Activated CD4-positive, alpha-beta T cell treated with anti-CD3 and anti-CD28 coated beads for 36 hours (primary cell): ENCODE measurements at regions of chr15 and their contacts with region 1.

Region 1: DNA sequence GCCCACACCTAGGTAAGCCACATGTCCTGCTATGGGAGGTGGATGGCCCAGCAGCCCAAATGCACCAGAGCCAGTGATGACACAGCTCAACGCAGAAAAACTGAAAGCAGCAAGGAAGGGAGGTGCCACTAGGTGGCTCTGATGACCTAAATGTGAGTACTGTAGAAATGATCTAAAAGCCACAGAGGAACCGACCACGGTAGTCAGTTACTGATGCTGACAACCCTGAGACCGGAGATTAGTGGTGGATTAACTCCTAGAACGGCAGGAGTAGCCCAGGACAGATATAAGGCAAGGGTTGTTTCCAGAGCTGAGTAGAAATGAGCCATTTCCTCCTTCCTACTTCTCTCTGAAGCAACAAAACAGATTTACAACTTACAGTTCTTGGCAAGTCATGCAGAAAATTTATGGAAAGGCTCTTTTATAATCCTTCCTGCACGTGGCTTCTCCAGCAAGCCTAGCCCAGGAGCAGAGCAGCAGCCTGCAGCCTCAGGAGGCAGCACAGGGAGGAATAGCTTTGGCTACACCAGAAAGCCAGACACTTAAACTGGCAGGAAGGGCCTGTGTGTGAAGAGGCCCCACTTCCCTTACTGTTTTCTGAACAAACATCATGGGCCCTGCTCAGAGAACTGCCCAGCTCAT is 13.1 kb downstream of the FBXL22 start:
- DNase-seq: peak; percentile 88
- ATAC-seq: peak; percentile 79
- H3K4me3 Mint-ChIP-seq: no peak overlapping the region
- H3K27ac Mint-ChIP-seq: peak overlapping the region; percentile 88
- H3K4me1 Mint-ChIP-seq: peaks cover 39% of the 10 kb centered on the region
- H3K27me3 Mint-ChIP-seq: no peaks in the 10 kb centered on the region

Region 2: DNA sequence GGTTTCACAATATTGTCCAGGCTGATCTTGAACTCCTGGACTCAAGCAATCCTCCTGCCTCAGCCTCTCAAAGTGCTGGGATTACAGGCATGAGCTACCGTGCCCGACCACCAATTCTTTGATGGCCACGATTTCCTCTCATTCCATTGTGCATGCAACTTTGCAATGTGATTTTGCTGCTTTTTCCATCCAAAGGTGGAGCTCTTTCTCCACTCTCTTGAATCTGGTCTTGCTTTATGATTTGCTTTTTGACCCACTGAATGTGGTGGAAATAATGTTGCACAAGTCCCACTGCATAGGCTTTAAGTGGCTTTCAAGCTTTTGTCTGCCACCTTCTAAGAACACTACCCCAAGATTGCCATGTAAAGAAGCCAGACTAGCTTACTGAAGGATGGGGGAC is 463.7 kb before region 1 on chr15:
- CTCF ChIA-PET with region 1: no interaction called
- POLR2A ChIA-PET with region 1: no interaction called
- intact Hi-C with region 1: no loop called
- DNase-seq: no peak
- ATAC-seq: peak; percentile 36
- H3K4me3 Mint-ChIP-seq: no peak overlapping the region
- H3K27ac Mint-ChIP-seq: no peak overlapping the region
- H3K4me1 Mint-ChIP-seq: peaks cover 7% of the 10 kb centered on the region
- H3K27me3 Mint-ChIP-seq: no peaks in the 10 kb centered on the region

Region 3: DNA sequence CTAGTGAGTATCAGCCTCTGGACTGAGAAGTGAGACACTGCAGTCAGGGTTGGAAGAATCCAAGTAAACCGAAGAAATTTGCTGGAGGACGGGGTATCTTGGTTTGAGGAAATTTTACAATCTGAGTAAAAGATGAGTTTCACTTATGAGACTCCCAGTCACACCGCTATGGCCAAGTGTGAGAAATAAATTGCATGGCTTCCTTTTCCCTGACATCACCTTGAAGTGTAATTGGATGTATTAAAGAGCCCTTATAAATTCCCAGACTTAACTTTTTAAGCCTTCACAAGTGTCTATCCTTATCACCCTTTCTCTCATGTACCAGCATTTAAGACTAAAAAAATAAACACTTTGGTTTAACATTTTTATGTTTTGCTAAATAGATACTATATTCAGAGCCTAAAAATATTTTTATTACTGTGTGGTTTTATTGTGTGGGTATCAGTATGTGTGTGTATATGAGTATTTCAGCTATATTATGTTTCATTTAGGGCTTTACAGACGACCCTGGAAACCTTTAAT is 82.1 kb before region 1 on chr15:
- CTCF ChIA-PET with region 1: no interaction called
- POLR2A ChIA-PET with region 1: no interaction called
- intact Hi-C with region 1: no loop called
- DNase-seq: no peak
- ATAC-seq: no peak
- H3K4me3 Mint-ChIP-seq: no peak overlapping the region
- H3K27ac Mint-ChIP-seq: peak overlapping the region; percentile 38
- H3K4me1 Mint-ChIP-seq: peaks cover 96% of the 10 kb centered on the region
- H3K27me3 Mint-ChIP-seq: no peaks in the 10 kb centered on the region

Region 4: DNA sequence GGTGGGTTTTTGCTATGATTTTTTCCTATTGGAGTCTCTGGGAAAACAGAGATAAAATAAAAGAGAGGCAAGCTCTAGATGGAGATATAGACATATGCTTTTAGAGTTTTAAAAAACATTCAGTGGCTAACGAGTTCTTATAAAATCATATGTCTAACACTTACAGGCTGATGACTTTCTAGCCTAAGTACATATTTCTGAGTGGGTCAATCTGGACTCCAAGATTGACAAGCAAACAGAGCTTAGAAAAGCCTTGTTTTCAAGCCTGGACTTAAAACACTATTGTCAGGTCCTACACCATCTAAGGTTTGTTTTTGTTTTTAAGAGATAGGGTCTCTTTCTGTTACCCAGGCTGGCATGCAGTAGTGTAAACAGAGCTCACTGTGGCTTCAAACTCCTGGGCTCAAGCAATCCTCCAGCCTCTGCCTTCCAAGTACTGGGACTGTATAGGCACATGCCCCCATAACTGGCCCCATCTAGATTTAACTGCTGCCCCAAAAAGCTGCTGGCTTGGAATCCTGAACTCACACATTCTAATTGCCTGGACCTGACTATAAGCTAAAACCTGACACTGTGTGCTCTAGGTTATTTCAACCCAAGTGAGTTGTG is 73.1 kb after region 1 on chr15:
- CTCF ChIA-PET with region 1: interaction called, 11 read pairs
- POLR2A ChIA-PET with region 1: no interaction called
- intact Hi-C with region 1: no loop called
- DNase-seq: no peak
- ATAC-seq: no peak
- H3K4me3 Mint-ChIP-seq: no peak overlapping the region
- H3K27ac Mint-ChIP-seq: peak overlapping the region; percentile 39
- H3K4me1 Mint-ChIP-seq: peaks cover 2% of the 10 kb centered on the region
- H3K27me3 Mint-ChIP-seq: no peaks in the 10 kb centered on the region

Region 5: DNA sequence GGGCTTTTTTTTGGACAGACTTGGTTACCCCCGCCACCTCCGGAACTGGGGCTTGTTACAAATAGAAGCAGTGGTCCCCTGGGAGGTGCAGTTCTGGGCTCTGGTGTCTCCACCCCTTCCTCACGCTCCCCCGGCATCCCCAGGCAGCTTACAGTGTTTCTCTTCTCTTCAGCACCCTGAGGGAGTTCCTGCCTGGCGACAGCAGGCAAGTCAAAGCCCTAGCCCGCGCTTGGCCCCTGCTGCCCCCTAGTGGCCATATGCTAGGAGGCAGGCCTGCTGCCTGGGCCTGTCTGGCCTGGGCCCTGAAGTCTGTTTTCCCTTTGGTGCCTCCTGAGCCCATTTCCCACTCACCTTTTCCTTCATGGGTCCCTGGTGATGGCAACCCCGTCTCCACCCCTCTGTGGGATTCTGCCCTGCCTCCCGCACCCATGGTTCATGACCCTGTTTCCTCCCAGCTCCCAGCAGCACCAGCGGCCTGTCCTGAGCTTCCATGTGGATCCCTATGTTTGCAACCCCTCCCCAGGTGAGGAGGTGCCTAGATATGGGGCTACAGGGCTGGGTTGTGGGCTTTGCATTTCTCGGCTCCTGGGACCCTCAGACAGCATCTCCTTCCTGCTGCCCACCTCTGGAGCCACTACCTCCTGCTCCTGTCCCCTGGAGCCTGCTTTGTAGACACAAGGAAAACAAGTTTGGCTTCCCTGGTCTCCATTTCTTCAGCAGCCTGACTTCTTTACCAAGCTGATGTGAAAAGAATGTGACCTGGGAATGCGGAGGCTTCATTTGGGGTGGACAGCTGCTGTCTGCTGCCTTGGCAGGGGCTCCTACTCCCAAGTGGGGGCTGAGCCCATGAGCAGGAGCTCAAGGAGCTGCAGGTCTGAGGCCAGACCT is 543.4 kb after region 1 on chr15:
- CTCF ChIA-PET with region 1: interaction called, 3 read pairs
- POLR2A ChIA-PET with region 1: no interaction called
- intact Hi-C with region 1: loop called in 1 of 2 experiments (anchors 5 kb)
- DNase-seq: peak; percentile 96
- ATAC-seq: peak; percentile 91
- H3K4me3 Mint-ChIP-seq: no peak overlapping the region
- H3K27ac Mint-ChIP-seq: no peak overlapping the region
- H3K4me1 Mint-ChIP-seq: peaks cover 23% of the 10 kb centered on the region
- H3K27me3 Mint-ChIP-seq: peaks cover 13% of the 10 kb centered on the region